T-cell (primary cell): ENCODE measurements at regions of chr5 and their contacts with region 1.

Region 1: DNA sequence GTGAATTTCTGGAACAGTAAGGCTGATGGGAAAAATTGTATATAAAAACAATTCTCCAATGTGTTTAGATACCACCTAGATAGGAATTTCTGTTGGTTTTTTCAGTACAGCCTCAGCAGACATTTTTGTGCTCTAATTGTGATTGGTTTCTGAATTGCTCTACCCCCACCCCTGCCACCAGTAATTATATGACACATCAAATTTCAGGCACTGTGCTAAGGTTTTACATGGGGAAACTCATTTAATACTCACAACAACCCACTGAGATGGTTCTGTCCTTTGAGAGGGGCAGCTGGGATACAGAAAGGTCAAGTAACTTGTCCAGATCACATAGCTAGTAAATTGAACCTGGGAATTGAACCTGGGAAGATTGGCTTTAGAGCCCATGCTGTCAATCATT is 288.0 kb downstream of the ARHGEF28 start:
- DNase-seq: no peak
- ATAC-seq: no peak
- H3K4me3 ChIP-seq: no peak overlapping the region
- H3K4me3 Mint-ChIP-seq: no peak overlapping the region
- H3K27ac ChIP-seq: no peak overlapping the region
- H3K27ac Mint-ChIP-seq: no peak overlapping the region
- H3K4me1 ChIP-seq: no peaks in the 10 kb centered on the region
- H3K4me1 Mint-ChIP-seq: no peaks in the 10 kb centered on the region
- H3K27me3 ChIP-seq: no peaks in the 10 kb centered on the region
- H3K27me3 Mint-ChIP-seq: peaks cover 0 to 1% of the 10 kb centered on the region in 2 donors

Region 2: GRCh38 chr5:73883646-73884045 is 30.3 kb before region 1 on chr5:
- CTCF ChIA-PET with region 1: interaction called in 1 of 2 experiments, 10 read pairs
- POLR2A ChIA-PET with region 1: no interaction called
- DNase-seq: no peak
- ATAC-seq: no peak
- H3K4me3 ChIP-seq: no peak overlapping the region
- H3K4me3 Mint-ChIP-seq: no peak overlapping the region
- H3K27ac ChIP-seq: no peak overlapping the region
- H3K27ac Mint-ChIP-seq: no peak overlapping the region
- H3K4me1 ChIP-seq: no peaks in the 10 kb centered on the region
- H3K4me1 Mint-ChIP-seq: no peaks in the 10 kb centered on the region
- H3K27me3 ChIP-seq: no peaks in the 10 kb centered on the region
- H3K27me3 Mint-ChIP-seq: peaks cover 22 to 27% of the 10 kb centered on the region in 2 donors